ENCODE measurements at regions of chr13 and their contacts with region 1.

Region 1: GRCh38 chr13:27826379-27827353 is 34.4 kb downstream of the GSX1 start:
- DNase-seq: peak; percentile 62 to 80
- ATAC-seq: peak; percentile 61 to 63 (median 61)
- H3K4me3 ChIP-seq: no peak overlapping the region
- H3K4me3 Mint-ChIP-seq: no peak overlapping the region
- H3K27ac ChIP-seq: no peak overlapping the region
- H3K27ac Mint-ChIP-seq: no peak overlapping the region
- H3K4me1 ChIP-seq: peaks cover 12% of the 10 kb centered on the region
- H3K4me1 Mint-ChIP-seq: peaks cover 5 to 9% of the 10 kb centered on the region in 2 donors
- H3K27me3 ChIP-seq: peaks cover 20% of the 10 kb centered on the region
- H3K27me3 Mint-ChIP-seq: peaks cover 56 to 72% of the 10 kb centered on the region in 2 donors
- CTCF ChIP-seq: peak; percentile 74

Region 2: GRCh38 chr13:26985285-26985878 is 841.3 kb before region 1 on chr13:
- intact Hi-C with region 1: loop called (anchors 2 kb)
- DNase-seq: peak; percentile 48 to 88
- ATAC-seq: peak; percentile 81 to 92 (median 91)
- H3K4me3 ChIP-seq: no peak overlapping the region
- H3K4me3 Mint-ChIP-seq: no peak overlapping the region
- H3K27ac ChIP-seq: no peak overlapping the region
- H3K27ac Mint-ChIP-seq: no peak overlapping the region
- H3K4me1 ChIP-seq: peaks cover 10% of the 10 kb centered on the region
- H3K4me1 Mint-ChIP-seq: peaks cover 4 to 5% of the 10 kb centered on the region in 2 donors
- H3K27me3 ChIP-seq: no peaks in the 10 kb centered on the region
- H3K27me3 Mint-ChIP-seq: peaks cover 10 to 15% of the 10 kb centered on the region in 2 donors
- CTCF ChIP-seq: peak; percentile 80

Region 3: GRCh38 chr13:27321468-27322431 is 504.9 kb before region 1 on chr13:
- intact Hi-C with region 1: no loop called
- DNase-seq: no peak
- ATAC-seq: no peak
- H3K4me3 ChIP-seq: no peak overlapping the region
- H3K4me3 Mint-ChIP-seq: no peak overlapping the region
- H3K27ac ChIP-seq: no peak overlapping the region
- H3K27ac Mint-ChIP-seq: no peak overlapping the region
- H3K4me1 ChIP-seq: no peaks in the 10 kb centered on the region
- H3K4me1 Mint-ChIP-seq: no peaks in the 10 kb centered on the region
- H3K27me3 ChIP-seq: no peaks in the 10 kb centered on the region
- H3K27me3 Mint-ChIP-seq: peaks cover 26 to 35% of the 10 kb centered on the region in 2 donors
- CTCF ChIP-seq: no peak

Region 4: DNA sequence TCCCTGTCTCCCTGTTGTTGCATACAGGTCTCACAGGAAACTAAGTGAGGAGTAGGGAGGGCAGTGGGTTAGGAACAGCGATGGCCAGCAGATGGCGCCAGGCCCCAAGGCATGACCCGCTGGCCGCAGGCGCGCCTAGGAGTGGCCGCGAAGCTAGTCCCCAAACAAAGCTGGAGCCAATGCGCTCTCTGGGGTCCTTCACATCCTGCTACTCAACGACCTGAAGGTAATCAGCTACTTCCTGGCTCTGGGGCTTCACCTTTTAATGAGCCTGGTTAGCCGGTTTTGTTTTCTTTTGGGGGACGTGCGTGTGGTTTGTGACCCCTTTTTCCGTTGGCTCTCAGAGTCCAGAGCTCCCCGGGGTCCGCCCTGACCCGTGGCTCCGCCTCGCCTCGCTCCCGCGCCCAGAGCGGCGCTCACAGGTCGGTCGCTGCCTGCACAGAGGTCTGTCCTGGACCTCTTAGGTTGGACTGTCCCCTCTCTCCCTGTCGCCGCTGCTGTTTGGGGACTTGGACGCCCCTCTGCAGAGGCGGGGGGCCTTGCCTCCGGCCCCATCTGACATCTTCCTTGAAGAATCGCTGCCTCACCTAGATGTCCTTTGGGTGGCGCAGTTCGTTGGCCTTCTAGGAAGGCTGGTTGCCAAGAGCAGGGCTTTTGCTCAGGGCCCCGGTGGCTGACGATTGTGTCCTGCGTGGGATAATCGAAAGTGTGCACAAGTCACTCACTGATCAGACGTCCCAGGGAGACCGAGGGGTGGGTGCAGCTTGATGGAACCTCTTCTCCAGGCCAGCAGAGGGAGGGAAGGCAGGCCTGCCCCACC is 464.4 kb before region 1 on chr13:
- intact Hi-C with region 1: loop called (anchors 1 kb)
- DNase-seq: peak; percentile 77 to 88
- ATAC-seq: peak; percentile 95 to 98 (median 98)
- H3K4me3 ChIP-seq: peak overlapping the region; percentile 31
- H3K4me3 Mint-ChIP-seq: peak overlapping the region; percentile 53
- H3K27ac ChIP-seq: no peak overlapping the region
- H3K27ac Mint-ChIP-seq: no peak overlapping the region
- H3K4me1 ChIP-seq: peaks cover 12% of the 10 kb centered on the region
- H3K4me1 Mint-ChIP-seq: peaks cover 0 to 12% of the 10 kb centered on the region in 2 donors
- H3K27me3 ChIP-seq: peaks cover 4% of the 10 kb centered on the region
- H3K27me3 Mint-ChIP-seq: peaks cover 9 to 23% of the 10 kb centered on the region in 2 donors
- CTCF ChIP-seq: peak; percentile 76

Region 5: DNA sequence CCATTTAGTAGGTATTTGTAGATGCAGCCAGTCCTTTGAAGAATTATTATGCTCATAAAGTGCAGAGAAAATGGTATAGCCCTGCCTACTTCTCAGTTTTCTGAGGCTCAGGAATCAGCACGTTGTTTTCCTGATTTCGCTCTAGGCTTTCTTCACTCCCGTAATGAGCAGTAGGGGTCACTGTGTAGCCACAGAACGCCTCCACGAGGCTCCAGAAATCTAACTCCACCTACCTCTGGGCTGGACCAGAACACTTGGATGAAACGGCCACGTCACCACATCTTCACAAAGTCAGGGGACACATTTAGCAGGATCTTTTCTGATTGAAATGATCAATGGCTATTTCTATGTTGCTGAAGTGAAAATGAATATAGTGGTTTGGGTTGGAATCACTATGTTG is 452.0 kb before region 1 on chr13:
- intact Hi-C with region 1: loop called (anchors 1 kb)
- DNase-seq: peak; percentile 39 to 77
- ATAC-seq: peak; percentile 79 to 93 (median 83)
- H3K4me3 ChIP-seq: no peak overlapping the region
- H3K4me3 Mint-ChIP-seq: no peak overlapping the region
- H3K27ac ChIP-seq: no peak overlapping the region
- H3K27ac Mint-ChIP-seq: no peak overlapping the region
- H3K4me1 ChIP-seq: no peaks in the 10 kb centered on the region
- H3K4me1 Mint-ChIP-seq: peaks cover 6 to 11% of the 10 kb centered on the region in 2 donors
- H3K27me3 ChIP-seq: no peaks in the 10 kb centered on the region
- H3K27me3 Mint-ChIP-seq: peaks cover 6 to 7% of the 10 kb centered on the region in 2 donors
- CTCF ChIP-seq: peak; percentile 72

Region 6: GRCh38 chr13:27406178-27406939 is 420.3 kb before region 1 on chr13:
- intact Hi-C with region 1: loop called (anchors 1 kb)
- DNase-seq: peak in 1 of 2 donors; percentile 78
- ATAC-seq: peak in 2 of 3 donors; percentile 60
- H3K4me3 ChIP-seq: no peak overlapping the region
- H3K4me3 Mint-ChIP-seq: no peak overlapping the region
- H3K27ac ChIP-seq: no peak overlapping the region
- H3K27ac Mint-ChIP-seq: no peak overlapping the region
- H3K4me1 ChIP-seq: peaks cover 5% of the 10 kb centered on the region
- H3K4me1 Mint-ChIP-seq: peaks cover 0 to 6% of the 10 kb centered on the region in 2 donors
- H3K27me3 ChIP-seq: no peaks in the 10 kb centered on the region
- H3K27me3 Mint-ChIP-seq: peaks cover 3 to 29% of the 10 kb centered on the region in 2 donors
- CTCF ChIP-seq: peak; percentile 59

Region 7: GRCh38 chr13:27533155-27533643 is 293.5 kb before region 1 on chr13:
- intact Hi-C with region 1: loop called (anchors 1 kb)
- DNase-seq: peak; percentile 61 to 67
- ATAC-seq: peak; percentile 78 to 89 (median 85)
- H3K4me3 ChIP-seq: peak overlapping the region; percentile 8
- H3K4me3 Mint-ChIP-seq: no peak overlapping the region
- H3K27ac ChIP-seq: no peak overlapping the region
- H3K27ac Mint-ChIP-seq: peak overlapping the region in 1 of 2 donors; percentile 43
- H3K4me1 ChIP-seq: peaks cover 10% of the 10 kb centered on the region
- H3K4me1 Mint-ChIP-seq: peaks cover 11 to 12% of the 10 kb centered on the region in 2 donors
- H3K27me3 ChIP-seq: no peaks in the 10 kb centered on the region
- H3K27me3 Mint-ChIP-seq: peaks cover 0 to 12% of the 10 kb centered on the region in 2 donors
- CTCF ChIP-seq: peak; percentile 79

Region 8: DNA sequence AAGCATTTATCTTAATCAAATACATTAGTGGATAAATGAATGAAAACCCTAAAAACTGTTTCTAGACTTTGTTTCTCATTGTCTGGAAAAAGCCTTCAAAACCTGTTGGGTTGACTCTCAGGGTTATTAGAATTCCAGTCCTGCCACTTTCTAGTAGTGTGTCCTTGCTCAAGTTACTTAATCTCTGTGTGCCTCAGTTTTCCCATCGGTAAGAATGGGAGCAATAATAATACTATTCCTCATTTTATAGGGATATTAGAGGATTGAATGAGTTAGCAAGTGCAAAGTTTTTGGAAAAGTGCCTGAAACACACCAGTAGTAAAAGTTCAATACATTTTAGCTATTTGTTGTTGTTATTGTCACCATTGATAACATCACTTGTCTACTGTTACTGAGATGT is 158.9 kb after region 1 on chr13:
- intact Hi-C with region 1: loop called (anchors 2 kb)
- DNase-seq: no peak
- ATAC-seq: no peak
- H3K4me3 ChIP-seq: no peak overlapping the region
- H3K4me3 Mint-ChIP-seq: no peak overlapping the region
- H3K27ac ChIP-seq: no peak overlapping the region
- H3K27ac Mint-ChIP-seq: no peak overlapping the region
- H3K4me1 ChIP-seq: no peaks in the 10 kb centered on the region
- H3K4me1 Mint-ChIP-seq: no peaks in the 10 kb centered on the region
- H3K27me3 ChIP-seq: peaks cover 3% of the 10 kb centered on the region
- H3K27me3 Mint-ChIP-seq: peaks cover 29 to 45% of the 10 kb centered on the region in 2 donors
- CTCF ChIP-seq: no peak

Region 9: GRCh38 chr13:28468023-28468915 is 641.6 kb after region 1 on chr13:
- intact Hi-C with region 1: no loop called
- DNase-seq: peak in 1 of 2 donors; percentile 13
- ATAC-seq: peak in 2 of 3 donors; percentile 44 to 85
- H3K4me3 ChIP-seq: no peak overlapping the region
- H3K4me3 Mint-ChIP-seq: no peak overlapping the region
- H3K27ac ChIP-seq: no peak overlapping the region
- H3K27ac Mint-ChIP-seq: no peak overlapping the region
- H3K4me1 ChIP-seq: no peaks in the 10 kb centered on the region
- H3K4me1 Mint-ChIP-seq: no peaks in the 10 kb centered on the region
- H3K27me3 ChIP-seq: peaks cover 2% of the 10 kb centered on the region
- H3K27me3 Mint-ChIP-seq: peaks cover 4 to 6% of the 10 kb centered on the region in 2 donors
- CTCF ChIP-seq: no peak

Measured in natural killer cell (primary cell).